Heart left ventricle (tissue), 16 donors: ENCODE measurements at regions of chr5 and their contacts with region 1.

Region 1: GRCh38 chr5:31232273-31232888 is 38.9 kb downstream of the CDH6 start:
- DNase-seq: peak in 4 of 5 donors; percentile 31 to 50 (median 38)
- ATAC-seq: peak; percentile 78 to 92 (median 90)
- H3K4me3 ChIP-seq: no peak overlapping the region
- H3K27ac ChIP-seq: peak overlapping the region in 3 of 12 donors; percentile 24 to 53 (median 48)
- H3K4me1 ChIP-seq: peaks cover 0 to 32% (median 7%) of the 10 kb centered on the region in 12 donors
- H3K27me3 ChIP-seq: no peaks in the 10 kb centered on the region
- CTCF ChIP-seq: peak; percentile 51 to 77 (median 65)
- POLR2A ChIP-seq: no peak

Region 2: DNA sequence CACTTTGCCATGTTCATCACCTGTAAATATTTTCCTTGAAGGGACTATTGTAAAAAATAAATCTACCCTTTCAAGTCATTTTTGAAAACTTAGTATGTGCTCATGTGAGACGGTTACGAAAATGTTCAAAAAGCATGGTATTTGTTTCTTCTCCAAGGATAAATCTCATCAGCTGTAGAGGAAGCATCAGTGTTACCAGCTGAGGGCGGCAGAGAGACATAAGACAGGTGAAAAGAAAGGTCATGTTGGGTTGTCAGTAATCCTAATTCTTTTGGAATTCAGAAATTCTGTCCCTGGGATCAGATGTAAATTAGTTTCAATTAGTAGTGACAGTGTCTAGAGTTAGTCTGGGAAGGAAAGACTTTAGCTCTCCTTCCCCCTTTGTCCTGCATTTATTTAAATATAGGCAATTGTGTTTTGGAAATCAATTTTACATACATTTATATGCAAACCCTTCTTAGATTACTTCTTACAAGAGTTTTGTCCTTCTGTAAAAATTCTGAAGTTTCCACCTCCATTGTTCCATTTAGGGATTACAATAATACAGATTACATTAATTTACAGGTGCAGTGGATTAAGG is 830.8 kb before region 1 on chr5:
- intact Hi-C with region 1: loop called in 5 of 10 experiments (anchors 5 kb)
- DNase-seq: peak in 2 of 5 donors; percentile 17 to 28
- ATAC-seq: no peak
- H3K4me3 ChIP-seq: no peak overlapping the region
- H3K27ac ChIP-seq: no peak overlapping the region
- H3K4me1 ChIP-seq: no peaks in the 10 kb centered on the region
- H3K27me3 ChIP-seq: no peaks in the 10 kb centered on the region
- CTCF ChIP-seq: peak in 10 of 12 donors; percentile 22 to 55 (median 44)
- POLR2A ChIP-seq: no peak

Region 3: DNA sequence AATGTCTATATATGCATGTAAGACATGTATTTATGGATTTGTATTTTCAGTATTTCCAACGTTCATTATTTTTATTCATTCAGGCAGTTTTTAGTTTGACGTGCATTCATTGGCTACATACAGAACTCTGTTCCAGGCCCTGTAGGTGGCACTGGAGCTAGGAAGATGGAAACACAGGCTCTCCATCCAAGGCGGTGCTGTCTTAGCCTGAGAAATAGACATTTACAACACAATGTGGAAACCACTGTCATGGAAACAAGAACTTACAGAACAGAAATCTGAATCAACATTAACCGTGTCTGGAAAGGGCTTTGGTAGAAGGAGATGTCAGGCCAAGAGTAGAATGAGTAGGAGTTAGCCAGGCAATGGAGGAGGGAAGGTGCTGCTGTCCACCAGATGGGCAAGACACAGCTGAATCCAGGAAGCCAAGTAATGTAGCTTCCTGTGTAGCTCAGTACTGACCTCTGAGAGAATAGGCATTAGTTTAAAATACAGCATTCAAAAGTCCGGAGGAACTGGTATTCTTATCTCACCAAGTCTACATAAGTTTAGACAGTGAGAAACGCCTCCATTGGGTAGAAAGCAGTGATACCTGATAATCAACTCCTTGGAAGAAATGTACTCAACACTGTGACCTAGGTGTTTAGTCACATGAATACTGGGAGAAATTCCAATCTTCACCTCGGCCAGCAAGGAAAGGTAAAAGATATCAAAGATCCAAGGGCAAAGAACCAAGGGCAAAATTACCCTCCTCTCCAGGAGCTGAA is 427.5 kb before region 1 on chr5:
- intact Hi-C with region 1: loop called in 6 of 10 experiments (anchors 2 to 10 kb)
- DNase-seq: peak in 3 of 5 donors; percentile 10 to 44 (median 19)
- ATAC-seq: peak in 3 of 4 donors; percentile 75 to 81 (median 76)
- H3K4me3 ChIP-seq: no peak overlapping the region
- H3K27ac ChIP-seq: no peak overlapping the region
- H3K4me1 ChIP-seq: no peaks in the 10 kb centered on the region
- H3K27me3 ChIP-seq: no peaks in the 10 kb centered on the region
- CTCF ChIP-seq: peak; percentile 8 to 63 (median 44)
- POLR2A ChIP-seq: no peak

Region 4: GRCh38 chr5:32153723-32154122 is 921.3 kb after region 1 on chr5:
- intact Hi-C with region 1: no loop called
- DNase-seq: no peak
- ATAC-seq: peak; percentile 35 to 56 (median 44)
- H3K4me3 ChIP-seq: no peak overlapping the region
- H3K27ac ChIP-seq: peak overlapping the region in 5 of 12 donors; percentile 3 to 26 (median 12)
- H3K4me1 ChIP-seq: peaks cover 14 to 89% (median 76%) of the 10 kb centered on the region in 12 donors
- H3K27me3 ChIP-seq: no peaks in the 10 kb centered on the region
- CTCF ChIP-seq: no peak
- POLR2A ChIP-seq: no peak